ENCODE measurements at regions of chr19 and their contacts with region 1.

Region 1: GRCh38 chr19:531009-531752 is 379 bp upstream of the CDC34 start:
- DNase-seq: peak; percentile 98
- H3K4me3 Mint-ChIP-seq: peak overlapping the region; percentile 83
- H3K27ac Mint-ChIP-seq: peak overlapping the region; percentile 90
- H3K4me1 Mint-ChIP-seq: peaks cover 13% of the 10 kb centered on the region
- H3K27me3 Mint-ChIP-seq: peaks cover 4% of the 10 kb centered on the region

Region 2: GRCh38 chr19:604355-604754 is 73.2 kb after region 1 on chr19:
- intact Hi-C with region 1: loop called (anchors 2 kb)
- DNase-seq: peak; percentile 82
- H3K4me3 Mint-ChIP-seq: no peak overlapping the region
- H3K27ac Mint-ChIP-seq: no peak overlapping the region
- H3K4me1 Mint-ChIP-seq: no peaks in the 10 kb centered on the region
- H3K27me3 Mint-ChIP-seq: no peaks in the 10 kb centered on the region

Region 3: GRCh38 chr19:633068-633785 is 102.0 kb after region 1 on chr19 and contains the start of gene POLRMT:
- intact Hi-C with region 1: loop called (anchors 5 kb)
- DNase-seq: peak; percentile 99
- H3K4me3 Mint-ChIP-seq: peak within 1 kb of the TSS; percentile 98
- H3K27ac Mint-ChIP-seq: peak within 1 kb of the TSS; percentile 97
- H3K4me1 Mint-ChIP-seq: peaks cover 17% of the 10 kb centered on the region
- H3K27me3 Mint-ChIP-seq: no peaks in the 10 kb centered on the region
- total RNA-seq, gene POLRMT: 103 and 104 TPM in 2 replicates